Transverse colon (tissue), 4 donors: ENCODE measurements at regions of chr1 and their contacts with region 1.

Region 1: GRCh38 chr1:151243683-151244216 is 10.8 kb upstream of the PSMD4 start:
- DNase-seq: no peak
- H3K4me3 ChIP-seq: no peak overlapping the region
- H3K27ac ChIP-seq: no peak overlapping the region
- H3K4me1 ChIP-seq: no peaks in the 10 kb centered on the region
- H3K27me3 ChIP-seq: no peaks in the 10 kb centered on the region
- CTCF ChIP-seq: no peak
- EP300 ChIP-seq: no peak
- POLR2A ChIP-seq: no peak

Region 2: DNA sequence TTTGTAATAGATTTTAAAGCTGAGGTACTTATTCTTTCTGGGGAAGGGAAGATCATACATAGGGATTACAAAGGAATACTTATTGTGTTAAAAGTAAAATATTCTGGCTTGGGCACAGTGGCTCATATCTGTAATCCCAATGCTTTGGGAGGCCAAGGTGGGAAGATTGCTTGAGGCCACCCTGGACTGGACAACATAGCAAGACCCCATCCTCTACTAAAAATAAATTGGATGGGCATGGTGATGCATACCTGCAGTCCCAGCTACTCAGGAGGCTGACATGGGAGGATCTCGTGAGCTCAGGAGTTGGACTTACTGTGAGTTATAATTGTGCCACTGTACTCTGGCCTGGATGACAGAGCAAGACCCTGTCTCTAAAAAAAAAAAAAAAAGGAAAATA is 145.6 kb before region 1 on chr1:
- in situ Hi-C with region 1: loop called in 1 of 4 experiments (anchors 10 kb)
- intact Hi-C with region 1: no loop called
- DNase-seq: no peak
- H3K4me3 ChIP-seq: no peak overlapping the region
- H3K27ac ChIP-seq: no peak overlapping the region
- H3K4me1 ChIP-seq: no peaks in the 10 kb centered on the region
- H3K27me3 ChIP-seq: no peaks in the 10 kb centered on the region
- CTCF ChIP-seq: no peak
- EP300 ChIP-seq: no peak
- POLR2A ChIP-seq: no peak